ENCODE measurements at regions of chr1 and their contacts with region 1.

Region 1: GRCh38 chr1:53145942-53146708 is 3.7 kb upstream of the SLC1A7 start:
- DNase-seq: peak; percentile 100
- ATAC-seq: peak; percentile 92
- H3K4me3 ChIP-seq: no peak overlapping the region
- H3K27ac ChIP-seq: peak overlapping the region; percentile 97
- H3K4me1 ChIP-seq: peaks cover 24% of the 10 kb centered on the region
- H3K27me3 ChIP-seq: no peaks in the 10 kb centered on the region
- CTCF ChIP-seq: no peak
- POLR2A ChIP-seq: peak; percentile 54; the same call in 1 of the 2 replicates
- RAD21 ChIP-seq: peak; percentile 31

Region 2: GRCh38 chr1:53001128-53001527 is 145.0 kb before region 1 on chr1:
- CTCF ChIA-PET with region 1: no interaction called
- POLR2A ChIA-PET with region 1: interaction called, 11 read pairs
- dilution Hi-C with region 1: no loop called
- in situ Hi-C with region 1: no loop called
- intact Hi-C with region 1: no loop called
- DNase-seq: no peak
- ATAC-seq: no peak
- H3K4me3 ChIP-seq: no peak overlapping the region
- H3K27ac ChIP-seq: no peak overlapping the region
- H3K4me1 ChIP-seq: no peaks in the 10 kb centered on the region
- H3K27me3 ChIP-seq: no peaks in the 10 kb centered on the region
- CTCF ChIP-seq: no peak
- POLR2A ChIP-seq: no peak
- RAD21 ChIP-seq: no peak

Region 3: DNA sequence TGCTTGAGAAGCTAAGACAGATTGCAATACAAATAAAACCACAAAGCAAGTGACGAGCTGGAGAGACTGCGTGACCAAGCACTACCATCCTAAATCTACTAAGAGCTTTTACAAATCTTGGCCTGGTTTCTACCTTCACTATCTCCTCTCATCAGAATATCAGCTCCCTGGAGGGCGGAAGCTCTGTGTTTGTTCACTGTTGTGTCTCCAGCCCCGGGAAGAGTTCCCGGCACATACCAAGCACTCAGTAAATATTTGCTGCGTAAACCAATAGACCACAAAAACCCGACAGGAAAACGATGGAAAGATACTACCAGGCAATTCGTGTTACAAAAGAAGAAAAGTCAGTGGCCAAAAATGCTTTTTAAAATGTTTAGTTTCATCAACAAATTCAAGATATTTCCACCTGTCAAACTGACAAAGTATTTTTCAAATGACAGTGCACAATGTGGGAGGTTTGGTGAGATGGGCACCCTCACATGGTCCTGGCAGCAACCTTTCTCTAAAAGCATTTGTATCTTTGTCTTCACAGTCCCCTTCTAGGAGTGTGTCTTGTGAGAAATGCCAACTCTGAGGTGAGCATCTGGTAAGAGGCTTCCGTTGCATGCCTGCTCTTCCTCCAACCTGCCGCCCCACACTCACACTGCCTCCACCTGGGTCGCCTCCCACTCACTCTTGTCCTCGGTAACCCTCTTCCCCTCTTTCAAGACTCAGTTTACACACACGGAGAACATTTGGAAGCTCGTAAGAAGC is 38.4 kb before region 1 on chr1:
- CTCF ChIA-PET with region 1: no interaction called
- POLR2A ChIA-PET with region 1: interaction called, 4 read pairs
- dilution Hi-C with region 1: no loop called
- in situ Hi-C with region 1: no loop called
- intact Hi-C with region 1: loop called (anchors 5 kb)
- DNase-seq: peak; percentile 94
- ATAC-seq: peak; percentile 86
- H3K4me3 ChIP-seq: no peak overlapping the region
- H3K27ac ChIP-seq: peak overlapping the region; percentile 96
- H3K4me1 ChIP-seq: peaks cover 30% of the 10 kb centered on the region
- H3K27me3 ChIP-seq: no peaks in the 10 kb centered on the region
- CTCF ChIP-seq: no peak
- POLR2A ChIP-seq: no peak
- RAD21 ChIP-seq: peak; percentile 37

Region 4: GRCh38 chr1:53176452-53177208 is 30.5 kb after region 1 on chr1:
- CTCF ChIA-PET with region 1: interaction called, 4 read pairs
- POLR2A ChIA-PET with region 1: interaction called, 3 read pairs
- dilution Hi-C with region 1: no loop called
- in situ Hi-C with region 1: no loop called
- intact Hi-C with region 1: loop called (anchors 1 kb)
- DNase-seq: peak; percentile 59
- ATAC-seq: peak; percentile 58
- H3K4me3 ChIP-seq: no peak overlapping the region
- H3K27ac ChIP-seq: peak overlapping the region; percentile 70; the same call in 1 of the 2 replicates
- H3K4me1 ChIP-seq: peaks cover 41% of the 10 kb centered on the region
- H3K27me3 ChIP-seq: no peaks in the 10 kb centered on the region
- CTCF ChIP-seq: peak; percentile 38
- POLR2A ChIP-seq: no peak
- RAD21 ChIP-seq: peak; percentile 31; the same call in 1 of the 2 replicates

Region 5: GRCh38 chr1:53190210-53190611 is 44.1 kb after region 1 on chr1:
- CTCF ChIA-PET with region 1: no interaction called
- POLR2A ChIA-PET with region 1: no interaction called
- dilution Hi-C with region 1: no loop called
- in situ Hi-C with region 1: no loop called
- intact Hi-C with region 1: no loop called
- DNase-seq: no peak
- ATAC-seq: no peak
- H3K4me3 ChIP-seq: no peak overlapping the region
- H3K27ac ChIP-seq: no peak overlapping the region
- H3K4me1 ChIP-seq: peaks cover 21% of the 10 kb centered on the region
- H3K27me3 ChIP-seq: no peaks in the 10 kb centered on the region
- CTCF ChIP-seq: no peak
- POLR2A ChIP-seq: no peak
- RAD21 ChIP-seq: no peak